Activated CD4-positive, alpha-beta memory T cell treated with anti-CD3 and anti-CD28 coated beads for 36 hours (primary cell): ENCODE measurements at regions of chr7 and their contacts with region 1.

Region 1: DNA sequence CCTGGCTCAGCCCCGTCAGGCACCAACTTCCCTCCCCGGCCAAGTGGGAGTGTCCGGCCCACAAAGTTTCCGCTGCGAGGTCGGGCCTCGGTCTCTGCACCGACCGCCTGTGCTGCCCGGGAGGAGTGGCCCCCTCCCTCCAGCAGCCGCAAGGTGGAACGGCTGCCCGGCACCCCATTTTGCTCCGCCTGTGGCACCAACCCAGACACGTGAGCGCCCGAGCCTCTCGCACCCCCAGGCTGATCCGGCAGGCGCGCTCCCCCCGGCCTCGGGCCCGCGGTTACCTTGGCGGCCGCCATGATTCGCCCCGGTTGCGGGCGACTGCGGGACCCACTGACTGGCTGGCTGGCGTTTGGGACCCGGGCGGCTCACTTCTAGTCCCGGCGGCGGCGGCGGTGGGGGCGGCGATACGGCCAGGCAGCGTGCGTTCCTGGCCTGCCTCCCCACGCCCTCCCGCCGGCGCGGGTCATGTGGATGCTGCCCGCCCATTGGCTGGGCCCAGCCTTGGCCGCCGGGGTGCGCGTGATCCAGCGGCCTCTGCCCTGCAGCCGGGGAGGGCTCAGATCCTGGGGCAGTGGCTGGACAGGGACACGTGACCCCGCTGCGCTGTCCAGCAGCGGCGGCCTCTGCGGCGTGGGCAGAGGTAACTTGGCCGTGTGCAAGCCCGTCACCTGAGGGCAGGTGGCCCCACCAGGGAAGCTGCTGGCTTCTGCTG is at the start of gene SLC25A13:
- DNase-seq: peak; percentile 75
- H3K4me3 Mint-ChIP-seq: peak within 1 kb of the TSS; percentile 88
- H3K27ac Mint-ChIP-seq: peak within 1 kb of the TSS; percentile 93
- H3K4me1 Mint-ChIP-seq: peaks cover 41% of the 10 kb centered on the region
- H3K27me3 Mint-ChIP-seq: no peaks in the 10 kb centered on the region
- total RNA-seq, gene SLC25A13: 7.5 to 7.9 TPM

Region 2: GRCh38 chr7:95511716-95512260 is 810.0 kb before region 1 on chr7:
- CTCF ChIA-PET with region 1: no interaction called
- POLR2A ChIA-PET with region 1: no interaction called
- intact Hi-C with region 1: loop called (anchors 10 kb)
- DNase-seq: peak; percentile 63
- H3K4me3 Mint-ChIP-seq: no peak overlapping the region
- H3K27ac Mint-ChIP-seq: no peak overlapping the region
- H3K4me1 Mint-ChIP-seq: no peaks in the 10 kb centered on the region
- H3K27me3 Mint-ChIP-seq: peaks cover 11% of the 10 kb centered on the region

Region 3: GRCh38 chr7:95986178-95986764 is 335.5 kb before region 1 on chr7:
- CTCF ChIA-PET with region 1: no interaction called
- POLR2A ChIA-PET with region 1: no interaction called
- intact Hi-C with region 1: no loop called
- DNase-seq: no peak
- H3K4me3 Mint-ChIP-seq: no peak overlapping the region
- H3K27ac Mint-ChIP-seq: no peak overlapping the region
- H3K4me1 Mint-ChIP-seq: no peaks in the 10 kb centered on the region
- H3K27me3 Mint-ChIP-seq: peaks cover 22% of the 10 kb centered on the region

Region 4: GRCh38 chr7:96285579-96285978 is 36.2 kb before region 1 on chr7:
- CTCF ChIA-PET with region 1: no interaction called
- POLR2A ChIA-PET with region 1: no interaction called
- intact Hi-C with region 1: loop called (anchors 1 kb)
- DNase-seq: peak; percentile 12
- H3K4me3 Mint-ChIP-seq: no peak overlapping the region
- H3K27ac Mint-ChIP-seq: peak overlapping the region; percentile 55
- H3K4me1 Mint-ChIP-seq: peaks cover 46% of the 10 kb centered on the region
- H3K27me3 Mint-ChIP-seq: no peaks in the 10 kb centered on the region

Region 5: DNA sequence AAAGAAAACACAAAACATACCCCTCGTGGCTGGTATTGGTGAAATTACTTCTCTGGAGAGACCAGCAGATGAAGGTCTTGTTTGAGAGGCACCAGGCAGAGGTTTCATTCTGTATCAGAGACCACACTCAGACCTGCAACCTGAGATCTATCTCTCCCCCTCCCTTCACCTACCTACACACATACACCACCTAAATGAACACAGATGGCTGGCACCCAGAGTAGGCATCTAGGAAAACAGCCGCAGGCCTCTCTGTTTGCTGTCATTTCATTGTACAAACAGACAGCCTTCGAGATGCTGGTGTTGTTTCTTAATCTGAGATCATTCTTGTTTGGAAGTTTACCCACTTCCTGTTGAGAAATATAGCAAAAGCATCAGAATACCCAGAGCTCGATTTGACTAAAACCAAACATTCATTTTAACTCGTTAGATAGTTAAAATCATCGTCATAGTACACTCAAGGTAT is 174.0 kb after region 1 on chr7:
- CTCF ChIA-PET with region 1: no interaction called
- POLR2A ChIA-PET with region 1: no interaction called
- intact Hi-C with region 1: loop called (anchors 1 kb)
- DNase-seq: peak; percentile 64
- H3K4me3 Mint-ChIP-seq: peak overlapping the region; percentile 16
- H3K27ac Mint-ChIP-seq: peak overlapping the region; percentile 49
- H3K4me1 Mint-ChIP-seq: peaks cover 11% of the 10 kb centered on the region
- H3K27me3 Mint-ChIP-seq: peaks cover 3% of the 10 kb centered on the region

Region 6: GRCh38 chr7:96837593-96837992 is 515.8 kb after region 1 on chr7:
- CTCF ChIA-PET with region 1: no interaction called
- POLR2A ChIA-PET with region 1: no interaction called
- intact Hi-C with region 1: loop called (anchors 1 kb)
- DNase-seq: peak; percentile 26
- H3K4me3 Mint-ChIP-seq: peak overlapping the region; percentile 14
- H3K27ac Mint-ChIP-seq: no peak overlapping the region
- H3K4me1 Mint-ChIP-seq: peaks cover 31% of the 10 kb centered on the region
- H3K27me3 Mint-ChIP-seq: peaks cover 47% of the 10 kb centered on the region